ENCODE measurements at regions of chr3 and their contacts with region 1.

Region 1: DNA sequence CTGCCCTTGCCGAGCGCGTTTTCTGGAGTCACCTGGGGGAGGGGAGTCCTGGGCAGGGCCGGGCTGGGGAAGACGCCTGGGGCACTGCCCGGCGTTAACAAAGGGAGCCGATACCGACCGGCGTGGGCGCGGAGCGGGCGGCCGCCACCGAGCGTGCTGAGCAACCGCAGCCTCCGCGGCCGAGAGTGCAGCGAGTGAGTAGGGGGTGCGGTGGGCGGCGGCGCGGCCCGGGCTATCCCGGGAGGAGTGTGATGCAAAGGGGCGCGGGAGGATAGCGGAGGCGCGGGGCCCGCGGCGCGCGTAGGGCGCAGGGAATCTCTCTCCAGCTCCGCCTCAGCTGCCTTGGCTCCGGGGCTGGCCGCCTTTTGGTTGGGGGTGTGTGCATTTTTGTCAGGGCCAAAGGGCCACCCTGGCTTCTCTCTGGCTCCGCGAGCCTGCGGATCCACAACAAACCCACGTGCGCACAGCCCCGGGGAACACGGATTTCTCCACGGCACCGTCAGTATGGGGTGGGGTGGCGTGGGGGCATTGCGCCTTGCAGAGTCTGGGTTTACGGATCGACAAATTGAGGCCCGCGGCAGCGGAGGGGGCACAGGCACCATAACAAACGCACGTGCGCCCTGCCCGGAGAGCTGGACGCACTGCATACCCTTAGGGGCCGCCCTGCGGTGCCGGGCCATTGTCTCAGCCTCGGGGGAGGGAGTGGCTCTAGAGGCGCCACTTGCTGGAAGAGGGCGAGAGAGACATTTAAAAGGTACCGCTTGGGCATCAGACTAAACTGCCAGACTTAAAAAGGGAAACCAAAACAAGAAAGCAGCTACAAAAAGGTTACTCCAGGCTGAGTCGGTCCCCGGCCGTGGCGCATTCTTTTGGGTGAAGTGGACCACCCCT is 560 bp downstream of the ST6GAL1 start:
- DNase-seq: peak; percentile 79 to 90 (median 86)
- ATAC-seq: peak; percentile 83 to 89 (median 86)
- H3K4me3 ChIP-seq: peak overlapping the region; percentile 75 to 98 (median 84)
- H3K27ac ChIP-seq: peak overlapping the region; percentile 81 to 97 (median 93)
- H3K4me1 ChIP-seq: peaks cover 5 to 50% (median 39%) of the 10 kb centered on the region in 12 donors
- H3K27me3 ChIP-seq: no peaks in the 10 kb centered on the region
- CTCF ChIP-seq: peak in 8 of 12 donors; percentile 11 to 34 (median 22)
- POLR2A ChIP-seq: peak in 1 of 2 donors; percentile 49

Region 2: GRCh38 chr3:186783073-186783730 is 147.7 kb before region 1 on chr3 and contains the start of gene EIF4A2:
- intact Hi-C with region 1: loop called in 1 of 10 experiments (anchors 5 kb)
- DNase-seq: peak; percentile 92 to 95 (median 93)
- ATAC-seq: peak; percentile 84 to 91 (median 87)
- H3K4me3 ChIP-seq: peak within 1 kb of the TSS; percentile 71 to 97 (median 84)
- H3K27ac ChIP-seq: peak within 1 kb of the TSS; percentile 95 to 100 (median 99)
- H3K4me1 ChIP-seq: peaks cover 7 to 45% (median 35%) of the 10 kb centered on the region in 12 donors
- H3K27me3 ChIP-seq: no peaks in the 10 kb centered on the region
- CTCF ChIP-seq: peak in 1 of 12 donors; percentile 10
- POLR2A ChIP-seq: peak in 1 of 2 donors; percentile 75
- total RNA-seq, gene EIF4A2: 291 to 496 (median 375) TPM

Region 3: GRCh38 chr3:186971578-186971977 is 40.7 kb after region 1 on chr3:
- intact Hi-C with region 1: loop called in 8 of 10 experiments (anchors 2 to 5 kb)
- DNase-seq: no peak
- ATAC-seq: peak in 1 of 4 donors; percentile 49
- H3K4me3 ChIP-seq: no peak overlapping the region
- H3K27ac ChIP-seq: peak overlapping the region in 9 of 12 donors; percentile 7 to 70 (median 51)
- H3K4me1 ChIP-seq: peaks cover 12 to 84% (median 51%) of the 10 kb centered on the region in 12 donors
- H3K27me3 ChIP-seq: no peaks in the 10 kb centered on the region
- CTCF ChIP-seq: no peak
- POLR2A ChIP-seq: peak in 1 of 2 donors; percentile 21

Region 4: GRCh38 chr3:187016639-187017345 is 85.9 kb after region 1 on chr3:
- intact Hi-C with region 1: loop called in 1 of 10 experiments (anchors 10 kb)
- DNase-seq: no peak
- ATAC-seq: peak in 3 of 4 donors; percentile 38 to 57 (median 47)
- H3K4me3 ChIP-seq: no peak overlapping the region
- H3K27ac ChIP-seq: peak overlapping the region in 4 of 12 donors; percentile 5 to 42 (median 28)
- H3K4me1 ChIP-seq: peaks cover 0 to 65% (median 51%) of the 10 kb centered on the region in 12 donors
- H3K27me3 ChIP-seq: no peaks in the 10 kb centered on the region
- CTCF ChIP-seq: no peak
- POLR2A ChIP-seq: no peak

Region 5: DNA sequence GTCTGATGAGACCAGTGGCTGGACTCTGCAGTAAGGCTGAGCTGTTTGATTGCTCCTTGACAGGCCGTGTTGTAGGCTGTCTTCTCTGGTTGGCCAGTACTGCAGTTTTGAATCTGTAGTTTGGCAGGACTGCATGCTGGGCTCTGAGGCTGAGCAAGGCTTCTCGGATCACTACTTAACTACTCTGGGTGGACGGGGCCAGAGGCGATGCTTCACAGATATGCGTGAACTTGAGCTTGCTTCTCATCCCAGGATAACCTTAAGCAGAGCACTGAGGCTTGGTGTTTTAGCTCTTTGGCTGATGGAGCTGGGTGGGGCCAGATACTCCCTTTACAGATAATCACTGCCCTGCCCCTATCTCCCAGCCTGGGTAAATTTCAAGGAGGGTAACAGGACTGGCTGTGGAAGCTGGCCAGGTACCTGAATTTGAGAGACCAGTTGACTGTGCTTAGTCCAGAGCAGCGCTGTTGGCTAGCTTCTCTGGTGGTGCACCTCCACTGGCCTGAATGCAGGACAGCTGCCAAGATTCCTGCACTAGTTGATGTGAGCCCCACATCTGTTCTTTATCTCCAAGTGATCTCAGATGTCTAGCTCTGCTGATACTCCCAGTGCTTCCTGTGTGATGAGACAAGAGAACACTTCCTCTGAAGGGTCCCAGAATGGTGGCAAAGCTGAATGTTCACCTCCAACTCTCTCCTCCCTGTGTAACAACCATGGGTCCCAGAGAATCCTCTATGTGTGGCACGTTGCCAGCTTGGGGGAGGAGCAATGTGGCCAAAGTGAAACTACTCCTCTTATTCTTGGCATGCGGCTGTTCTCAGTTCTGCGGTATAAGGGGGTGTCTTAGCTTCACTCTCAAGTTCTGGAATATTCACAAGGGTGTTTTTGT is 170.5 kb after region 1 on chr3:
- intact Hi-C with region 1: loop called in 2 of 10 experiments (anchors 5 to 10 kb)
- DNase-seq: peak; percentile 80 to 84 (median 83)
- ATAC-seq: peak; percentile 57 to 77 (median 76)
- H3K4me3 ChIP-seq: peak overlapping the region in 10 of 12 donors; percentile 3 to 48 (median 36)
- H3K27ac ChIP-seq: peak overlapping the region in 11 of 12 donors; percentile 17 to 78 (median 48)
- H3K4me1 ChIP-seq: peaks cover 0 to 35% (median 21%) of the 10 kb centered on the region in 12 donors
- H3K27me3 ChIP-seq: no peaks in the 10 kb centered on the region
- CTCF ChIP-seq: no peak
- POLR2A ChIP-seq: no peak

Region 6: DNA sequence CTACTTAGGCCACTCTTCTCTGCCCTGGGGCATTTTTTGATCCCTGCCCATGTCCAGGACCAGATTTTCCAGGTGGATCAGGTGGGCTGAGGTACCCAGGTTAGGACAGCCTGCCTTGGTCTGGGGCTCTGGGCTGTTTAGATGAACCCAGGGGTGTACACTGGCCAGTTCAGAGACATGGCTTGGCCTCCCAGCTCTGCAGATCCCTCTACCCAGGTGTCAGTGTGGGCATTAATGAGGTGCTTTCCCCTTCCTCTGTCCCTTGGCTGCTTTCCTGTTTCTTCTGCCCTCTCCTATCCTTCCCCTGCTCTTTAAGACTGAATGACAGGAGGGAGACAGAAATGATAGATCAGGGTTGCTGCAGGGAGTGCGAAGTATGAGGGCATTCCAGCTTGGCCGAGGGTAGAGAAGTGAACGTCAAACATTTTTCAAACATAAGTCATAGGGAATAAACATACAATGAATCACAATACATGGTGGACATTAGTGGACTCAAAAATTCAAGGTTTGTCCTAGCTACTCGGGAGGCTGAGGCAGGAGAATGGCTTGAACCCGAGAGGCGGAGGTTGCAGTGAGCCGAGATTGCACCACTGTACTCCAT is 296.9 kb after region 1 on chr3:
- intact Hi-C with region 1: no loop called
- DNase-seq: no peak
- ATAC-seq: no peak
- H3K4me3 ChIP-seq: no peak overlapping the region
- H3K27ac ChIP-seq: no peak overlapping the region
- H3K4me1 ChIP-seq: no peaks in the 10 kb centered on the region
- H3K27me3 ChIP-seq: no peaks in the 10 kb centered on the region
- CTCF ChIP-seq: no peak
- POLR2A ChIP-seq: no peak